Dendritic cell treated with granulocyte-macrophage colony-stimulating factor and Interleukin-4, amounts not matched to agents 40 ng/mL and 50 ng/mL, for 4 days (primary cell): ENCODE measurements at regions of chr11 and their contacts with region 1.

Region 1: GRCh38 chr11:119666463-119667131 is 62.4 kb downstream of the NECTIN1 start:
- H3K4me3 Mint-ChIP-seq: no peak overlapping the region
- H3K27ac Mint-ChIP-seq: peak overlapping the region; percentile 40
- H3K4me1 Mint-ChIP-seq: peaks cover 27% of the 10 kb centered on the region
- H3K27me3 Mint-ChIP-seq: no peaks in the 10 kb centered on the region

Region 2: GRCh38 chr11:119481021-119481666 is 185.5 kb before region 1 on chr11:
- intact Hi-C with region 1: loop called (anchors 5 kb)
- H3K4me3 Mint-ChIP-seq: no peak overlapping the region
- H3K27ac Mint-ChIP-seq: no peak overlapping the region
- H3K4me1 Mint-ChIP-seq: peaks cover 11% of the 10 kb centered on the region
- H3K27me3 Mint-ChIP-seq: peaks cover 27% of the 10 kb centered on the region

Region 3: GRCh38 chr11:119728651-119729580 is 62.3 kb after region 1 on chr11 and contains the start of gene NECTIN1:
- intact Hi-C with region 1: loop called (anchors 1 kb)
- H3K4me3 Mint-ChIP-seq: peak within 1 kb of the TSS; percentile 87
- H3K27ac Mint-ChIP-seq: peak within 1 kb of the TSS; percentile 86
- H3K4me1 Mint-ChIP-seq: peaks cover 43% of the 10 kb centered on the region
- H3K27me3 Mint-ChIP-seq: peaks cover 38% of the 10 kb centered on the region

Region 4: DNA sequence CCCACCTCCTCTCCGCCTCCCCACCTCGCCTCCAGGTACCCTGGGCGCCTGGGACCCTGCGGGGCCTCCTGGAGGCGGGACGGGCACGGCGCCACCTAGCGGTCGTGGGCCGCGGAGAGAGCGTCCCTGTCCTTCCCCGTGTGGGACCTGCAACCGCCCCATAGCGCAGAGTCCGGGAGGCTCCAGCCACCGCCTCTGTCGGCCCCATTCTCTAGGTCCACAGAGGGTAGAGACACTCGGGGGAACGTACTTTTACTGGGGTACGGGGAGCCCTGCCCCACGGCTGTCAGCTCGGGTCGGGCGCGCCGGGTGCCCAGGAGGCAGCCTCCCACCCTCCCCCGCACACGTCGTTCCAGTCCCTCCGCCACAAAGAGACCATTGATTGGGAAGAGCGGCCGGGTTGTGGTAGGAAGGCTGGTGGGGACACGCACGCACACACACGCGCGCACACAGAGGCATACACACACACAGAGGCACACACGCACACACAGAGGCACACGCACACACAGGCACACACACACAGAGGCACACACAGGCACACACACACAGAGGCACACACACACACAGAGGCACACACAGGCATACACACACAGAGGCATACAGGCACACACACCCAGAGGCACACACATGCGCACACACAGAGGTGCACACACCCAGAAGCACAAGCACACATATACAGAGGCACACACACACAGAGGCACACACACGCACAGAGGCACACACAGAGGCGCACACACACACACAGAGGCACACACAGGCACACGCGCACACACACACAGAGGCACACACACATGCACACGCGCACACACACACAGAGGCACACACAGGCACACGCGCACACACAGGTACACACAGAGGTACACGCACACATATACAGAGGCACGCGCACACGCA is 75.0 kb after region 1 on chr11:
- intact Hi-C with region 1: loop called (anchors 2 kb)
- H3K4me3 Mint-ChIP-seq: no peak overlapping the region
- H3K27ac Mint-ChIP-seq: no peak overlapping the region
- H3K4me1 Mint-ChIP-seq: peaks cover 5% of the 10 kb centered on the region
- H3K27me3 Mint-ChIP-seq: peaks cover 60% of the 10 kb centered on the region

Region 5: GRCh38 chr11:120079750-120080490 is 413.3 kb after region 1 on chr11:
- intact Hi-C with region 1: loop called (anchors 2 kb)
- H3K4me3 Mint-ChIP-seq: no peak overlapping the region
- H3K27ac Mint-ChIP-seq: no peak overlapping the region
- H3K4me1 Mint-ChIP-seq: no peaks in the 10 kb centered on the region
- H3K27me3 Mint-ChIP-seq: peaks cover 19% of the 10 kb centered on the region